ENCODE measurements at regions of chr20 and their contacts with region 1.

Region 1: GRCh38 chr20:43994486-43995100 is 79.9 kb downstream of the TOX2 start:
- DNase-seq: peak; percentile 57
- H3K27ac ChIP-seq: no peak overlapping the region
- CTCF ChIP-seq: no peak

Region 2: DNA sequence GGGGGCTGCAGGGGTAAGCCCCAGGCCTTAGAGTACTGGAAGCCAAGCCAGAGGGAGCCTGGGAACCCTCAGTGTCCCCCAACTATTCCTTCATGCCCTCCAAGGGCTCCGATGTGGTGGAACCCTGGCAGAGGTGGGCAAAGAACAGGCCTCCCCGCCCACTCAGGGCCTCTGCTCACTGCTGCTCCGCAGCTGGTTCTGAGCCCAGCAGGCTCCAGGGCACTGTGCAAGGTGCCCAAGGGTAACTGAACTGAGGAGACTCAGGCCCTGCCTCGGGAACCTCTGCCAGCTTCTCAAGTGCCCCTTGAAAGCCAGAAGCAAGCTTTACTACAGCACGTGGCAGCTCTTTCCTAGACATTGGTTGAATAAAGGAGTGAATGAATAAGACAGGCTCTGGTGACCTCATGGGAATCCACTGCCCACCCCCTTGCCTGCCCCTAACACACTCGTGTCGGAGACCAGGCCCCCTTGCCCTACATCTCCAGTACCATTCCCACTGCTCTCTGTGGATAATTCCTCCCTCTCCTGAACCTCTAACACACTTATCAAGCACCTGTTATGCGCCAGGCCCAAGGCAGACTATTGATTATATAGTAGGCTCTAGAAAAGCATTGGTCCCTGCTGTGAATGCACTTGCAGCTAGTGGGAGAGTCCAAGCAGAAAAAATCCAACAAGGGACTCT is 25.0 kb before region 1 on chr20:
- CTCF ChIA-PET with region 1: no interaction called
- POLR2A ChIA-PET with region 1: no interaction called
- DNase-seq: no peak
- H3K27ac ChIP-seq: no peak overlapping the region
- CTCF ChIP-seq: no peak

Region 3: GRCh38 chr20:43983359-43983758 is 11.2 kb before region 1 on chr20:
- CTCF ChIA-PET with region 1: interaction called, 10 read pairs
- POLR2A ChIA-PET with region 1: no interaction called
- DNase-seq: no peak
- H3K27ac ChIP-seq: no peak overlapping the region
- CTCF ChIP-seq: no peak; the same call in 1 of the 2 replicates

Region 4: GRCh38 chr20:44066645-44067606 is 72.3 kb after region 1 on chr20:
- CTCF ChIA-PET with region 1: no interaction called
- POLR2A ChIA-PET with region 1: no interaction called
- DNase-seq: no peak
- H3K27ac ChIP-seq: no peak overlapping the region
- CTCF ChIP-seq: no peak